GM12878 (cell line): ENCODE measurements at regions of chr7 and their contacts with region 1.

Region 1: DNA sequence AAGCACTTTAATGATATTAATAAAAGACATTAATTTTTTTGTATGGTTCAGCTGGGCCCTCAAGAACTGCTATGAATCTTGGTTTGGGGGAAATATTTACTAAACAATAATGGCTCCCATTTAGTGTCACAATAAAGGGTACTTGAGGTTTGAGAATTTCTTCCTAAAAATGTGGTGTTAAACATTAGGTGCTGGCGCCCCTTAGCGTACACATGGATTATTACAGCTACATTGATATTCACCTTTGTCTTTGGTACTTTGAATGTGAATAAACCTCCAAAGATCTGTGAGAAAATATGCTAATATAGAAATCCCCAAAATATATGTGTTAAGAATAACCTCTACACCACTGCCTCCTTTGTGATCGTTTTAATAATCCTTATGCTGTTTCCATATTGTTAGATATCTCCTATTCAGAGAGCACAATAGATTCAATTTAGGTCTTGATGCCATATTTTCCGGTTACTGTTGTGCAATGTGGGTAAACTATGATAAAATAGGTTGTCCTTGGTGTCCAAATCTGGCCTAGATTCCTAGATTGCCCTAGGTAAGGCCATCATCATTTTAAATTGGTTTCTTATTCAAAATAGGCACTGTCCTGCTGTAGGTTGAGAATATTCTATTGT is 161.8 kb upstream of the CACNA2D1 start:
- DNase-seq: no peak
- ATAC-seq: peak; percentile 59; the same call in 2 of the 3 replicates
- H3K4me3 ChIP-seq: no peak overlapping the region
- H3K27ac ChIP-seq: no peak overlapping the region
- H3K4me1 ChIP-seq: no peaks in the 10 kb centered on the region
- H3K27me3 ChIP-seq: no peaks in the 10 kb centered on the region
- CTCF ChIP-seq: peak; percentile 52 to 70 (median 67)
- EP300 ChIP-seq: no peak
- POLR2A ChIP-seq: no peak
- RAD21 ChIP-seq: peak; percentile 73

Region 2: GRCh38 chr7:81482600-81483186 is 1122.7 kb before region 1 on chr7:
- CTCF ChIA-PET with region 1: interaction called, 7 read pairs
- POLR2A ChIA-PET with region 1: no interaction called
- RAD21 ChIA-PET with region 1: interaction called, 8 read pairs
- SMC1A ChIA-PET with region 1: interaction called, 11 read pairs
- in situ Hi-C with region 1: no loop called
- intact Hi-C with region 1: no loop called
- DNase-seq: no peak
- ATAC-seq: peak; percentile 65
- H3K4me3 ChIP-seq: no peak overlapping the region
- H3K27ac ChIP-seq: no peak overlapping the region
- H3K4me1 ChIP-seq: no peaks in the 10 kb centered on the region
- H3K27me3 ChIP-seq: no peaks in the 10 kb centered on the region
- CTCF ChIP-seq: peak; percentile 36 to 58 (median 43); a peak in 4 of 6 replicates
- EP300 ChIP-seq: no peak
- POLR2A ChIP-seq: no peak
- RAD21 ChIP-seq: peak; percentile 53; the same call in 1 of the 2 replicates

Region 3: DNA sequence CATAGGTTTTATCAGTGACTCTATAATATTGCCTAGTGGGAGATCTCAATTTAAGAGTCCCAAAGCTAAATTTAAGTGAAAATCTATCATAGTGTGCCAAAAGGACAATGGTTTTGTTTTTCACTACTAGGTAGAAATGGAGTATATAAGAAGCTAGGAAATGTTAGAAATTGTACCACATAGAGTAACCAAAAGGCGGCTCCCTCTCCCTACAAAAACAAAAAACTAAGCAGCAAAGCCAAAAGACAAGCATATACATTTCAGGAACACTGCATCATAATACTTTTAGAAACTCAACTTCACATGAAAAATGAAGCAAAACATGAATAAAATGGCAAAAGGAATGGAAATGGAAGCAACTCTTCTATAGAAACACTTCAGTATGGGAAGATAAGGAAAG is 433.3 kb before region 1 on chr7:
- CTCF ChIA-PET with region 1: interaction called, 7 read pairs
- POLR2A ChIA-PET with region 1: no interaction called
- RAD21 ChIA-PET with region 1: interaction called, 12 read pairs
- SMC1A ChIA-PET with region 1: interaction called, 8 read pairs
- in situ Hi-C with region 1: no loop called
- intact Hi-C with region 1: no loop called
- DNase-seq: no peak
- ATAC-seq: peak; percentile 64
- H3K4me3 ChIP-seq: no peak overlapping the region
- H3K27ac ChIP-seq: no peak overlapping the region
- H3K4me1 ChIP-seq: no peaks in the 10 kb centered on the region
- H3K27me3 ChIP-seq: no peaks in the 10 kb centered on the region
- CTCF ChIP-seq: peak in 1 of 3 experiments; percentile 5; a peak in 2 of 6 replicates
- EP300 ChIP-seq: no peak
- POLR2A ChIP-seq: no peak
- RAD21 ChIP-seq: peak; percentile 36; the same call in 1 of the 2 replicates

Region 4: DNA sequence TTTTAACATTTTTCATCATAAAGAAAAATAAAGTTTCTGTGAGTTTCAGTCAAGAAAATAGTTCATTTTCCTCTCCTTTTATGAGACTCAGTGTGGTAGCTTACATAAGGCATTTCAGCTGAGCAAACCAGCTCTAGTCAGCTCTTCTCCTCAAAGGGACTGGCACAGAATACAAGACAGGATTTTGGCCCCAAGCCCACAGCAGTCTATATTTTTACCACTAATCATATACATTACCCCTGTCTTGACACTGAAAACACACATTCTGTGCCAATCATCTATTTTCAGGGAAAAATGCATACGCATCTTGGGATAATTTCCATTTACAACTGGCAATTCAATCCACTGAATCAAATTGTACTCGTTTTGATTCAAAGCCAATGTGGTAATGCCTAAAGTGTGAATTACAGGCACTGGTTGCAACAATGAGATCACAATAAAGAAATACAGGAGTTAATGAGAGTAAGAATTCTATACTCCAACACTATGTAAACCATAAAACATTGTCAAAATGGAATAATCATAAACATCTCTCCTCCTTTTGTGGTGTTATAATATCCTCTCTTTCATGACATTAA is 348.2 kb before region 1 on chr7:
- CTCF ChIA-PET with region 1: no interaction called
- POLR2A ChIA-PET with region 1: no interaction called
- RAD21 ChIA-PET with region 1: no interaction called
- SMC1A ChIA-PET with region 1: no interaction called
- in situ Hi-C with region 1: no loop called
- intact Hi-C with region 1: no loop called
- DNase-seq: no peak
- ATAC-seq: 0 out of 3 replicates have a peak, but pooled peaks have one; percentile 21
- H3K4me3 ChIP-seq: no peak overlapping the region
- H3K27ac ChIP-seq: no peak overlapping the region
- H3K4me1 ChIP-seq: no peaks in the 10 kb centered on the region
- H3K27me3 ChIP-seq: no peaks in the 10 kb centered on the region; a peak in 1 of 4 replicates
- CTCF ChIP-seq: no peak
- EP300 ChIP-seq: no peak
- POLR2A ChIP-seq: no peak
- RAD21 ChIP-seq: no peak

Region 5: DNA sequence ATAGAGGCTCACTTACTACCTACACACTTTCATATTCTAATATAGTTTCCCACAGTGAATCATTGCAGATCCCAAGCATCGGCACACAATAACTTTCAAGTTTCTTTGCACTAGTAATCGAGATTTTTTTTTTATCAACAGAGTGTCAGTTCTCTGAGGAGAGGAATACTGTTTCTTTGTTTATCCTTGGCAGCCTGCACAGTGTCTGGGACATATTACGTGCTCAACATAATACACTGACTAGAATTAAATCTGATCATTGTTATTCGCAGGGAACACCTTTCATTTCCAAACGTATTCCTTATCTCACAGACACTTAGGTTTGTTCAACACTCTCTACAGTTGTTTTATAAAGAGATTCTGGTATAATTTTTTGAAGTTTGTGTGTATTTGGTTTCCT is 257.1 kb before region 1 on chr7:
- CTCF ChIA-PET with region 1: no interaction called
- POLR2A ChIA-PET with region 1: no interaction called
- RAD21 ChIA-PET with region 1: no interaction called
- SMC1A ChIA-PET with region 1: no interaction called
- in situ Hi-C with region 1: no loop called
- intact Hi-C with region 1: no loop called
- DNase-seq: no peak
- ATAC-seq: peak; percentile 16; the same call in 2 of the 3 replicates
- H3K4me3 ChIP-seq: no peak overlapping the region
- H3K27ac ChIP-seq: no peak overlapping the region
- H3K4me1 ChIP-seq: no peaks in the 10 kb centered on the region
- H3K27me3 ChIP-seq: no peaks in the 10 kb centered on the region
- CTCF ChIP-seq: no peak
- EP300 ChIP-seq: no peak
- POLR2A ChIP-seq: no peak
- RAD21 ChIP-seq: no peak

Region 6: DNA sequence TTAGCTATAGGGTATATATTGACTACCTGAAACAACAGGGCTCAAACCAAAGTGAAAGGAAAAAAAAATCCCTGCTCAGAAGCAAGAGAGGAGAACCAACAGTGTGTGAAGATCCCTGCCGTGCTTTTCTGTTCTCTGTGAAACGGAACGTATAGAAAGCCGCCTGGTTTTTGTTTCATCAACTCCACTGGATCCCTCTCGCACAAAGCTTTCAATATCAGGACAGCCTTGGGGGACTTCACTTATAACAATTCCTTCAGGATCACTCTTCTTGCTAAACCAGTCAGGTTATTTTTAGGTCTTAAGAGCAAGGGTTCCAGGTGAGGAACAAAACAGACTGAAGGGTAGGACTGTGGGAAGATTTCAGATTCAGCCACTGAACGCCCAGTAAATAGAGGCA is 10.7 kb before region 1 on chr7:
- CTCF ChIA-PET with region 1: interaction called, 10 read pairs
- POLR2A ChIA-PET with region 1: no interaction called
- RAD21 ChIA-PET with region 1: interaction called, 11 read pairs
- SMC1A ChIA-PET with region 1: interaction called, 15 read pairs
- in situ Hi-C with region 1: no loop called
- intact Hi-C with region 1: no loop called
- DNase-seq: no peak
- ATAC-seq: no peak; the same call in 2 of the 3 replicates
- H3K4me3 ChIP-seq: no peak overlapping the region
- H3K27ac ChIP-seq: no peak overlapping the region
- H3K4me1 ChIP-seq: no peaks in the 10 kb centered on the region
- H3K27me3 ChIP-seq: no peaks in the 10 kb centered on the region
- CTCF ChIP-seq: no peak
- EP300 ChIP-seq: no peak
- POLR2A ChIP-seq: no peak
- RAD21 ChIP-seq: no peak

Region 7: DNA sequence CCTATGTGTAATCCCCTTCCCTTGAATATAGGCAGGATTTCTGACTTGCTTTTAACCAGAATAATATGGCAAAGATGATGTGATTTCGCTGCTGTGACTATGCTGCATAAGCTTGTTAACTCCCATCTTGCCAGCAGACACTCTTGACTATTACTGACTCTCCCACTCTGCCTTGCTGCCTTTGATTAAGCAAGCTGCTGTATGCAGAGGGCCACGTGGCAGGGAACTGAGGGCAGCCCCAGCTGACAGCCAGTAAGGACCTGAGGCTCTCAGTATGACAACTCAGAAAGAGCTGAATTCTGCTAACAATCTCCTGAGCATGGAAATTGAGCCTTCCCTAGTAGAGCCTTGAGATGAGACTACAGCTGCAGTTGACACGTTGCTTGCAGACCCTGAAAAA is 117.6 kb after region 1 on chr7:
- CTCF ChIA-PET with region 1: interaction called, 33 read pairs
- POLR2A ChIA-PET with region 1: no interaction called
- RAD21 ChIA-PET with region 1: interaction called, 6 read pairs
- SMC1A ChIA-PET with region 1: interaction called, 23 read pairs
- in situ Hi-C with region 1: loop called (anchors 10 kb)
- intact Hi-C with region 1: loop called (anchors 2 kb)
- DNase-seq: no peak
- ATAC-seq: peak; percentile 67
- H3K4me3 ChIP-seq: no peak overlapping the region
- H3K27ac ChIP-seq: no peak overlapping the region
- H3K4me1 ChIP-seq: no peaks in the 10 kb centered on the region
- H3K27me3 ChIP-seq: no peaks in the 10 kb centered on the region
- CTCF ChIP-seq: no peak
- EP300 ChIP-seq: no peak
- POLR2A ChIP-seq: no peak
- RAD21 ChIP-seq: no peak